PC-3 (cell line): ENCODE measurements at regions of chr1 and their contacts with region 1.

Region 1: GRCh38 chr1:27192039-27192529 is 37.2 kb upstream of the SLC9A1 start:
- DNase-seq: peak; percentile 90
- ATAC-seq: peak; percentile 92
- H3K4me3 ChIP-seq: no peak overlapping the region
- H3K27ac ChIP-seq: peak overlapping the region; percentile 99
- H3K4me1 ChIP-seq: peaks cover 21% of the 10 kb centered on the region
- H3K27me3 ChIP-seq: no peaks in the 10 kb centered on the region
- CTCF ChIP-seq: no peak

Region 2: GRCh38 chr1:27154991-27155781 is 36.9 kb before region 1 on chr1 and contains the start of gene SLC9A1:
- CTCF ChIA-PET with region 1: interaction called, 3 read pairs
- POLR2A ChIA-PET with region 1: interaction called, 17 read pairs
- intact Hi-C with region 1: no loop called
- DNase-seq: peak; percentile 87
- ATAC-seq: peak; percentile 86
- H3K4me3 ChIP-seq: peak within 1 kb of the TSS; percentile 81
- H3K27ac ChIP-seq: peak within 1 kb of the TSS; percentile 48
- H3K4me1 ChIP-seq: peaks cover 43% of the 10 kb centered on the region
- H3K27me3 ChIP-seq: no peaks in the 10 kb centered on the region
- CTCF ChIP-seq: peak; percentile 83
- total RNA-seq, gene SLC9A1: 25.2 and 26.4 TPM in 2 replicates

Region 3: DNA sequence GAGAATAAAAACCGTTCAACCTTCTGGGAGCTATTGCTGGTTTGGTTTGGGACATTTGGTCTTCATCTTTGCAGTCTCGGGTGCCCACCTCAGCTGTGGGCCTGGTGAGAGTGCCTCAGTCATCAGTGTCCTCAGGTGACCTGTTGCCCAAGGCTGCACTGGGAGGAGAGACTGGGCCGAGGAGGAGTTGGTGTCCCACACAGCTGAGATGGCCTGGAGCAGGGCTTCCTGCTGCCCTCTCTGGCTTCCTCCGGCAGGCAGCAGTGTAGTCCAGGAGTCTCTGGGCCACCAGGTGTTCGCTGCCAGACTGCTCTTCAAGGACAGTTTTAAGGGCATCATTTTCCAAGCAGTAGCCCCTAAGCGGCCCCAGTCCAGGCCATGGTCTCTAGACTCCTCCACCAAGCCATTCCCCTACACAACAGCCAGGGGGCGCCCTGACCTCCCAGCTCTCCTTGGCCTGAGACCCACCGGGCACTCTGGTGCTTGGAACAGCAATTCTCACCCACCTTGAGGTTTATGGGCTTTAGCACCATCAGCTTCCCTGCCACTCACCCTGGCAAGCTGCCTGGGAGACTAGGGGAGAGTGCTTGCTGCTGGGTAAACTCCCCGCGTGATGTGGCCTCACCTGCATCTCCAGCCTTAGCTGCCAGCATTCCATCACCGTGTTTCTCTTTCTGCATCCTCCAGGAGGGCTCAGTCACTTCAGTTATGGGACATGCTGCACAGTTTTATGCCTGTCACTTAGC is 140.6 kb after region 1 on chr1:
- CTCF ChIA-PET with region 1: no interaction called
- POLR2A ChIA-PET with region 1: no interaction called
- intact Hi-C with region 1: no loop called
- DNase-seq: no peak
- ATAC-seq: peak; percentile 57; the same call in 1 of the 2 replicates
- H3K4me3 ChIP-seq: no peak overlapping the region
- H3K27ac ChIP-seq: no peak overlapping the region
- H3K4me1 ChIP-seq: no peaks in the 10 kb centered on the region
- H3K27me3 ChIP-seq: no peaks in the 10 kb centered on the region
- CTCF ChIP-seq: peak; percentile 86